ENCODE measurements at regions of chr7 and their contacts with region 1.

Region 1: DNA sequence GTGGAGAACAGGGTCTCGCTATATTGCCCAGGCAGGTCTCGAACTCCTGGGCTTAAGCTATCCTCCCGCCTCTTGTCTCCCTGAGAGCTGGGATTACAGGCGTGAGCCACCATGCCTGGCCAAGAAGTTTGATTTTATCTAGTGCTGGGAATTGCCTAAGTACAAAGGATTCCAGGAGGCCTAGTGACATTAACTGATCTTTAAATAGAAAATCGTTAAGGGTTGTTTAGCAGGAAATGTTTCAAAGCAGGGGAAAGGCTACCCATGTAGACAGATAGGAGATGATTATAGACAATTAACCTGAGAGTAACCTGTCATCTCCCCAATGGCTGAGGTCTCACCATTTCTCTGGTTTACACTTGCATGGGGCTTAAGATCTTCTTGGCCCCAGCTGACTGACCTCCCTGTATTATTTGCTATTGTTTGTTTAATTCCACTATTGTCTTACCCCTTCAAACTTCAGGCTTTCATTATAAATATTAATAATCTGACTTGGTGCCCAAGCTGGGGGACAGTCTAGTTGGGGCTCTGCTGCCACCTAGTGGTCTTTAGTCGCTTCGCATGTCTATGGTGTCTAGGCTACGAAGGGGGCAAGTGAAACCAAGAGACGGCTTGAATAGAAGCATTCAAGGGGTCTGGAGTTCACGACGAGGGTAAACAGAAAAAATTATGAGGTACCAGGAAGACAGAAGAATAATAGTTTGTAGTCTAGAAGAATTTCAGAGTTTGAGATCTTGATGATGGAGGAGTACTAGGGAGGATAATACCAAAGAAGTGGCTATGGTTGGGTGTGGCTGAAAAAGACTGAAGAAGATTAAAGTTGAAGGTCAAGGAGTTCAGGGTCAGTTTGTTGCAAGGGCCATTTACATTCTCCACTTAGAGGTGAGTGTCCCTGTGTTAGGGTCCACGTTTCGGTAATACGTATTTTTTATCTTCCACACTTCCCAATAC is 40.4 kb upstream of the BPGM start:
- DNase-seq: peak; percentile 75 to 89
- H3K4me3 ChIP-seq: no peak overlapping the region
- H3K27ac ChIP-seq: no peak overlapping the region
- H3K4me1 ChIP-seq: peaks cover 0 to 20% (median 10%) of the 10 kb centered on the region in 4 donors
- H3K27me3 ChIP-seq: peaks cover 0 to 11% (median 0%) of the 10 kb centered on the region in 3 donors
- CTCF ChIP-seq: peak in 5 of 7 experiments; percentile 77 to 94 (median 89)
- EP300 ChIP-seq: no peak
- POLR2A ChIP-seq: no peak

Region 2: GRCh38 chr7:134444198-134444871 is 161.9 kb before region 1 on chr7:
- intact Hi-C with region 1: loop called (anchors 5 kb)
- DNase-seq: no peak
- H3K4me3 ChIP-seq: no peak overlapping the region
- H3K27ac ChIP-seq: no peak overlapping the region
- H3K4me1 ChIP-seq: no peaks in the 10 kb centered on the region
- H3K27me3 ChIP-seq: no peaks in the 10 kb centered on the region
- CTCF ChIP-seq: no peak
- EP300 ChIP-seq: no peak
- POLR2A ChIP-seq: no peak

Region 3: GRCh38 chr7:134514663-134515062 is 91.6 kb before region 1 on chr7:
- intact Hi-C with region 1: loop called (anchors 5 kb)
- DNase-seq: peak in 1 of 2 donors; percentile 84
- H3K4me3 ChIP-seq: no peak overlapping the region
- H3K27ac ChIP-seq: no peak overlapping the region
- H3K4me1 ChIP-seq: peaks cover 0 to 16% (median 10%) of the 10 kb centered on the region in 4 donors
- H3K27me3 ChIP-seq: no peaks in the 10 kb centered on the region
- CTCF ChIP-seq: peak in 6 of 7 experiments; percentile 63 to 91 (median 84)
- EP300 ChIP-seq: no peak
- POLR2A ChIP-seq: no peak